ENCODE measurements at regions of chr22 and their contacts with region 1.

Region 1: GRCh38 chr22:31749636-31750364 is at the start of gene PRR14L:
- DNase-seq: peak; percentile 91 to 99
- H3K4me3 ChIP-seq: peak within 1 kb of the TSS; percentile 86 to 88
- H3K27ac ChIP-seq: peak within 1 kb of the TSS; percentile 77 to 88
- H3K4me1 ChIP-seq: peaks cover 0 to 28% of the 10 kb centered on the region in 2 donors
- H3K27me3 ChIP-seq: no peaks in the 10 kb centered on the region
- CTCF ChIP-seq: peak in 1 of 3 experiments; percentile 28
- total RNA-seq, gene PRR14L: 17.2 TPM

Region 2: GRCh38 chr22:31661851-31662656 is 87.7 kb before region 1 on chr22 and contains the start of gene PISD:
- intact Hi-C with region 1: loop called (anchors 2 kb)
- DNase-seq: peak; percentile 92 to 98
- H3K4me3 ChIP-seq: peak within 1 kb of the TSS; percentile 58 to 85
- H3K27ac ChIP-seq: peak within 1 kb of the TSS; percentile 46 to 61
- H3K4me1 ChIP-seq: peaks cover 6% of the 10 kb centered on the region in 2 donors
- H3K27me3 ChIP-seq: no peaks in the 10 kb centered on the region
- CTCF ChIP-seq: no peak
- total RNA-seq, gene PISD: 110 TPM

Region 3: DNA sequence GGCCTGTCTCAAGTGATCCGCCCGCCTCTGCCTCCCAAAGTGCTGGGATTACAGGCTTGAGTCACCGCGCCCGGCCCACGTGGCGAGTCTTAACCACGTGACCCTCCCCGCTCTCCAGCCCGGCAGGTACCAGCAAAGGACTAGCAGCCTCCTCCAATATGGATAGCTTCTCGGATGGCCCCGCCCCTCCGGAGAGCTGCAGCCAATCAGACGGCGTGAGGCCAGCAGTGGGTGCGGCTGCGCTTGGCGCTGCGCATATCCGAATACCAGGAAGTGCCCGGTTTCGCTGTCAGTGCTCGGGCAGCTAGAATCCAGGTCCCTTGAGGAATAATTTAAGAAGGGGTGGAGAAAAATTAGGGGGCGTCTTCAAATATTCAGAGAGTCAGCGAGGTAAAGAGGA is 73.1 kb before region 1 on chr22:
- intact Hi-C with region 1: loop called (anchors 5 kb)
- DNase-seq: peak; percentile 92 to 97
- H3K4me3 ChIP-seq: peak overlapping the region; percentile 37 to 61
- H3K27ac ChIP-seq: peak overlapping the region; percentile 59 to 80
- H3K4me1 ChIP-seq: peaks cover 4 to 19% of the 10 kb centered on the region in 2 donors
- H3K27me3 ChIP-seq: no peaks in the 10 kb centered on the region
- CTCF ChIP-seq: no peak

Region 4: DNA sequence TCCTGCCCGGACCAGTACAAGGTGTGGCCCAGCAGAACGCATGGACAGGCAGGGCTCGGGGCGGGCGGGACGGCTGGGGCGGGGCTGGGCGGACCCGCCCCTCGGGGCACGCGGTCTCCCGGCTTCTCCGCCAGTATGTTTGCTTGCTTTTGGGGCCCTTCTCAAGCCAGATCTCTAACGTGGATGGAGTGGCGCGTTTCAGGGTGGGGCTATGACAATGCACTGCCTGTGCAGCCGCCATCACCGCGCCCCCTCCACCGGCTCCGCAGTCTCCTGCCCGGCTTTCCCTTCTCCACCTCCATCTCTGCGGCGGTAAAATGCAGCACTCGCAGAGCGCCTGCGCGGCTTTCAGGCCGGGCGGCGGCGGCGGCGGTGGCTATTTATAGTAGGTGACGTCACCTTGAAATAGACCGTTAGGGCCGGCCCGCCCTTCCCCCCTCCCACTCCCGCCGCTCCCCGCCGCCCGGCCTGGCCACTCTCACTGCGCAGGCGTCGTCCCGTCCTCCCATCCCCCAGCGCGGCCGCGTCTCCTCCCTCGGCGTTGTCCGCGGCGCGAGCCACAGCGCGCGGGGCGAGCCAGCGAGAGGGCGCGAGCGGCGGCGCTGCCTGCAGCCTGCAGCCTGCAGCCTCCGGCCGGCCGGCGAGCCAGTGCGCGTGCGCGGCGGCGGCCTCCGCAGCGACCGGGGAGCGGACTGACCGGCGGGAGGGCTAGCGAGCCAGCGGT is 194.3 kb after region 1 on chr22 and contains the start of gene YWHAH:
- intact Hi-C with region 1: loop called (anchors 1 kb)
- DNase-seq: peak; percentile 70 to 96
- H3K4me3 ChIP-seq: peak within 1 kb of the TSS; percentile 83 to 98
- H3K27ac ChIP-seq: peak within 1 kb of the TSS; percentile 95 to 99
- H3K4me1 ChIP-seq: peaks cover 0 to 3% of the 10 kb centered on the region in 2 donors
- H3K27me3 ChIP-seq: no peaks in the 10 kb centered on the region
- CTCF ChIP-seq: peak in 1 of 3 experiments; percentile 22
- total RNA-seq, gene YWHAH: 139 TPM